HepG2 (cell line): ENCODE measurements at regions of chrX and their contacts with region 1.

Region 1: DNA sequence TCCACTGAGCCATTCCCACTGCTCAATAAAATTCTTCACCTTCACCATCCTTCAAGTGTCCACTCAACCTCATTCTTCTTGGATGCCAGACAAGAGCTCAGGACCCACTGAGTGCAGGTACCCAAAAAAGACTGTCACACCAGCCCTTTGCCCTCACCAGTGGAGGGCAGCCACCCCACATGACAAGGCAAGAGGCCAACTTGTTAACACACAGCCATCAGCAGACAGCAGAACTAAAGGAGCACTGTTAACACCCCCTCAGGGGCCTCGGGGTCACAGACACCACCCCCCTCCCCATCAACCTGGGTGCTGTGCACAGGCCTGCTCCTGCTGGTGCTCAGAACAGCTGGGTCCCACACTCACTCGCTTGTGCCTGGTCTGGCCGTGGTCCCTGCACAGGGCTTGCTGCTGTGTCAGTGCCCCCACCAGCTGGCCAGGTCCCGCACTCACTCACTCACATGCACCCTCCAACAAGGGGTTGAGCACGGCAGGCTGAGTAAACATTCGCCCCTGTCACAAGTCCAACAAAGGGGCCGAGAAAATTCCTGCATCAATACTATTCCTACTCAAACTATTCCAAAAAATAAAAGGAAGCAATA is 54.1 kb downstream of the ATRX start:
- DNase-seq: peak; percentile 21
- ATAC-seq: peak; percentile 97
- H3K4me3 ChIP-seq: no peak overlapping the region; a peak in 1 of 6 replicates
- H3K27ac ChIP-seq: no peak overlapping the region
- H3K4me1 ChIP-seq: peaks cover 19% of the 10 kb centered on the region
- H3K27me3 ChIP-seq: no peaks in the 10 kb centered on the region
- CTCF ChIP-seq: peak; percentile 53
- EP300 ChIP-seq: no peak
- POLR2A ChIP-seq: no peak
- RAD21 ChIP-seq: no peak

Region 2: DNA sequence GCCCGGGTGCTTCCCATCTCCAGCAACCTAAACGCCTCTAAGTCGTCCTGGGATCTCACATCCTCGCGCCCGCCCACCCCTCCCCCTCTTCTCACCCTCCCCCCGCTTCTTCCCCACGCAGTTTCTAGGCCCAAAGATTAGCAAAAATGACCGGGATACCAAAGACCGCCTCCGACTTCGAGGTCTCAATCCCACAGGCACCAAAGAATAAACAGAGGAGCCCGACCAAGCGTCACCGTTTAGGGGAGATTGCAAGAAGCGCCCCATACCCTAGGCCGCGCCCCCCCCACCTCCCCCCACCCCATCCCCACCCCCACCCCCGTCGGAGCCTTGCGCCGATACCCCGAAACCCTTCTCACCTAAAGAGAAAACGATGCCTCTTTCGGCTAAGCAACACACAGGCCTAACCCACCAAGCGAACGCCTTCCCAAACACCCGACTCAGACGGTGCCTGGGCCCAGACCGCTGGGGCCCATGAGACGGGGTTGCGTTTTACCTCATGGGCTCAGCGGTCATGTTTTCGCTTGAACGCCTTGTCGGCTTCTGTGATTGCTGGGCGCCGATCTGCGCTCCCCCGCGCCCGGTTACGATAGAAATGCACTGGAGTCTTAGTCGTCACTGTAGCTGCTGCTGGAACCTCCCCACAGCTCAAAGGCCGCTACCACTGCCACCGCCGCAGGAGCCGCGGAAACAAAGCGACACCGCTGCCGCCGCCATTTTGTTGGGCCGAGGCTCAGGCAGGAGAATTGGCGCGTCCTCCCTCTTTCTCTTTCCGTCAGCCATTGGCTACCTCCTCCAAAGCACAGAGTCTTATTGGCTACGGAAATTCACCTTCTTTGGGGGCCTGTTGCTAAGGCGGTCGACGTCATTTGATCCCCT is 53.8 kb after region 1 on chrX and contains the start of gene ATRX:
- CTCF ChIA-PET with region 1: no interaction called
- POLR2A ChIA-PET with region 1: no interaction called
- in situ Hi-C with region 1: no loop called
- intact Hi-C with region 1: loop called (anchors 5 kb)
- DNase-seq: peak; percentile 82
- ATAC-seq: peak; percentile 92
- H3K4me3 ChIP-seq: peak within 1 kb of the TSS; percentile 80 to 84 (median 81)
- H3K27ac ChIP-seq: peak within 1 kb of the TSS; percentile 95
- H3K4me1 ChIP-seq: 0 out of 2 replicates have a peak, but pooled peaks cover 7% of the 10 kb centered on the region
- H3K27me3 ChIP-seq: no peaks in the 10 kb centered on the region; a peak in 1 of 5 replicates
- CTCF ChIP-seq: no peak
- EP300 ChIP-seq: 0 out of 4 replicates have a peak, but pooled peaks of 1 of the 2 experiments have one; percentile 36
- POLR2A ChIP-seq: peak; percentile 73 to 80
- RAD21 ChIP-seq: no peak; the same call in 1 of the 2 replicates
- total RNA-seq, gene ATRX: 44.5 and 55.4 TPM in 2 replicates